ENCODE measurements at regions of chr19 and their contacts with region 1.

Region 1: GRCh38 chr19:8355631-8356402 is 8.1 kb upstream of the ANGPTL4 start:
- DNase-seq: peak; percentile 53
- ATAC-seq: peak; percentile 41 to 82 (median 68)
- H3K4me3 ChIP-seq: no peak overlapping the region
- H3K27ac ChIP-seq: peak overlapping the region; percentile 10
- H3K4me1 ChIP-seq: peaks cover 20% of the 10 kb centered on the region
- H3K27me3 ChIP-seq: no peaks in the 10 kb centered on the region
- CTCF ChIP-seq: no peak

Region 2: GRCh38 chr19:8396563-8397203 is 40.9 kb after region 1 on chr19:
- intact Hi-C with region 1: loop called (anchors 2 kb)
- DNase-seq: peak; percentile 73 to 83
- ATAC-seq: peak; percentile 19 to 50 (median 34)
- H3K4me3 ChIP-seq: no peak overlapping the region
- H3K27ac ChIP-seq: no peak overlapping the region
- H3K4me1 ChIP-seq: peaks cover 50% of the 10 kb centered on the region
- H3K27me3 ChIP-seq: no peaks in the 10 kb centered on the region
- CTCF ChIP-seq: peak; percentile 55

Region 3: GRCh38 chr19:8438236-8438635 is 82.4 kb after region 1 on chr19:
- intact Hi-C with region 1: no loop called
- DNase-seq: peak in 1 of 2 donors; percentile 28
- ATAC-seq: no peak
- H3K4me3 ChIP-seq: no peak overlapping the region
- H3K27ac ChIP-seq: no peak overlapping the region
- H3K4me1 ChIP-seq: no peaks in the 10 kb centered on the region
- H3K27me3 ChIP-seq: no peaks in the 10 kb centered on the region
- CTCF ChIP-seq: no peak

Region 4: GRCh38 chr19:8459520-8460259 is 103.9 kb after region 1 on chr19:
- intact Hi-C with region 1: loop called in 1 of 2 experiments (anchors 5 kb)
- DNase-seq: no peak
- ATAC-seq: peak in 1 of 4 donors; percentile 23
- H3K4me3 ChIP-seq: peak overlapping the region; percentile 32
- H3K27ac ChIP-seq: peak overlapping the region; percentile 58
- H3K4me1 ChIP-seq: peaks cover 91% of the 10 kb centered on the region
- H3K27me3 ChIP-seq: no peaks in the 10 kb centered on the region
- CTCF ChIP-seq: no peak

Region 5: DNA sequence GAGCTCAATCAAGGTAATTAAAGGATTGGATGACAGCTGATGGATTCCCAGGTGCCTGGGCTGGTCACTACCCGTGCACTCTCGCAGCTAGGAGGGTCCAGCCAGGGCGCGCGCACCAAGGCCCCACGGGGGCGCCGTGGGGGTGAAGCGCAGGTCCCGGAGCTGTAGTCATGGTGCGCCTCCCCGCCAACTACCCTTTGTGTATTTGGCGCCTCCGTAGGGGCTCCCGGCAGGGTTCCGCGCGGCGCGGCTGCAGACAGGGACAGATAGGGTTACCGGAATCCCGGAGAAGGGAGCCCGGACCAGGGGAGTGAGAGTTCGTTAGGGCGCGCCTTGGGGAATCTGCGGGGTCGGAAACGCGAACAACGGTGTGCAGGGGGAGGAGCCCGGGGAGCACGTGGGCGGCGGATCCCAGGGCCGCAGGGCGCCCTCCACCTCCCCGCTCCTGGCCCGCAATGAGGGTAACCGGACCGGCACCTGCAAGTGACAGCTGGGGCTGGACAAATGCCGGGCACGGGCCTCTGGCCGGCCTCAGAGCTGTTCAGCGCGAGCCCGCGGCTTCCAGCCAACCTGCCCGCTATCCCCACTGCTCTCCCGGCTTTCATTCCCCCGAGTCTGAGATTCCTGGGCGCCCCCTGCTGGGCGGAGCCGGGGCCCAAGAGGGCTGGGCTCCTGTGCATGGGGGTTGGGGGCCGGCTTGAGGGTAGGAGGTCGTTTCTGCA is 150.0 kb after region 1 on chr19:
- intact Hi-C with region 1: loop called (anchors 2 to 5 kb)
- DNase-seq: peak; percentile 82 to 92
- ATAC-seq: peak; percentile 87 to 91 (median 90)
- H3K4me3 ChIP-seq: peak overlapping the region; percentile 73
- H3K27ac ChIP-seq: peak overlapping the region; percentile 53
- H3K4me1 ChIP-seq: peaks cover 11% of the 10 kb centered on the region
- H3K27me3 ChIP-seq: no peaks in the 10 kb centered on the region
- CTCF ChIP-seq: peak; percentile 84